ENCODE measurements at regions of chr7 and their contacts with region 1.

Region 1: DNA sequence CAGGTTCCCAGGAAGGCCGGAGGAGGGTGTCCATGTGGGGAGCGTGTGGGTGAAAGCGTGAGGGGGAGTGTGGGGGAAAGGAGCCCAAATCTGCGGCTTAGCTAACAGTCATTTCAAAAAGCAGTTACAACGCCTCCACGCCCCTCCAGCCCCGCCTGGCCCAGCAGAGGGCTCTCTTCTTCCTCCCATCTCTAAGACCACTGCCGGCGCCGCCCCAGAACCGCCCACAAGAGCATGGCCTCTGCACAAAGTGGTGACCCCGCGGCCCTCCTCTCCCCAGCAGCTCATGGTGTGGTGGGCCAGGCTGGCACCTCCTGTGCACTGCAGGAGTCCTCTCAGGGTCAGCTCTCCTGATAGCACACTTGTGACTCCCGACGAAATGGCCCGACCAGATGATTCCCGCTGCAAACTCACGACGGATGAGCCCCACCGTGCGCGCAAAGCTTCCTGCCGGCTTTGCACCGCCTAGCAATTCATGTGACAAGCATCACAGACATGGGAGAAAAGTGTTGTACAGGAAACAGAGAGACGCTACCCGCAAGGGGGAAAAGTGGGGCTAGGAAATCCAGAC is 12.4 kb upstream of the HUS1 start:
- DNase-seq: peak; percentile 94
- H3K4me3 Mint-ChIP-seq: peak overlapping the region; percentile 92
- H3K27ac Mint-ChIP-seq: peak overlapping the region; percentile 93
- H3K4me1 Mint-ChIP-seq: peaks cover 16% of the 10 kb centered on the region
- H3K27me3 Mint-ChIP-seq: no peaks in the 10 kb centered on the region

Region 2: GRCh38 chr7:47945261-47946001 is 46.4 kb before region 1 on chr7:
- CTCF ChIA-PET with region 1: interaction called, 9 read pairs
- intact Hi-C with region 1: loop called (anchors 1 kb)
- DNase-seq: peak; percentile 88
- H3K4me3 Mint-ChIP-seq: no peak overlapping the region
- H3K27ac Mint-ChIP-seq: no peak overlapping the region
- H3K4me1 Mint-ChIP-seq: no peaks in the 10 kb centered on the region
- H3K27me3 Mint-ChIP-seq: no peaks in the 10 kb centered on the region

Region 3: GRCh38 chr7:48004638-48005037 is 12.8 kb after region 1 on chr7:
- CTCF ChIA-PET with region 1: interaction called, 10 read pairs
- intact Hi-C with region 1: no loop called
- DNase-seq: no peak
- H3K4me3 Mint-ChIP-seq: no peak overlapping the region
- H3K27ac Mint-ChIP-seq: no peak overlapping the region
- H3K4me1 Mint-ChIP-seq: no peaks in the 10 kb centered on the region
- H3K27me3 Mint-ChIP-seq: no peaks in the 10 kb centered on the region

Region 4: DNA sequence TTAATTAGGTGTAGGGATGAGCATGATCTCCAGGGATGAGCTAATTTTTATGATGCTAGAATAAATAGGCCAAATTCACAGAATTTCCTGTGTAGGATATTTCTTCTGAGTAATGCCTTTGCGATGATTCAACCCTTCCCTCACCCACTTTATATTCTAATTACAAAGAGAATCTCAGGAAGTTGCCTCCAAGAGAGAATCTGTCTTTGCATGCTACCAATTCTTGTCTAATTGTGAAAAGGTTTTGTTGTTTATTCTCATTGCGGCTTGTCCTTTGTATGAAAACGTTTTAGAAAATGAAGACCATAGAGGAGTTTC is 49.8 kb after region 1 on chr7:
- CTCF ChIA-PET with region 1: no interaction called
- intact Hi-C with region 1: loop called (anchors 1 kb)
- DNase-seq: no peak
- H3K4me3 Mint-ChIP-seq: no peak overlapping the region
- H3K27ac Mint-ChIP-seq: peak overlapping the region; percentile 62
- H3K4me1 Mint-ChIP-seq: peaks cover 29% of the 10 kb centered on the region
- H3K27me3 Mint-ChIP-seq: peaks cover 11% of the 10 kb centered on the region

Region 5: GRCh38 chr7:48094751-48095562 is 103.1 kb after region 1 on chr7:
- CTCF ChIA-PET with region 1: interaction called, 12 read pairs
- intact Hi-C with region 1: loop called (anchors 1 kb)
- DNase-seq: no peak
- H3K4me3 Mint-ChIP-seq: no peak overlapping the region
- H3K27ac Mint-ChIP-seq: peak overlapping the region; percentile 94
- H3K4me1 Mint-ChIP-seq: peaks cover 84% of the 10 kb centered on the region
- H3K27me3 Mint-ChIP-seq: no peaks in the 10 kb centered on the region

Region 6: DNA sequence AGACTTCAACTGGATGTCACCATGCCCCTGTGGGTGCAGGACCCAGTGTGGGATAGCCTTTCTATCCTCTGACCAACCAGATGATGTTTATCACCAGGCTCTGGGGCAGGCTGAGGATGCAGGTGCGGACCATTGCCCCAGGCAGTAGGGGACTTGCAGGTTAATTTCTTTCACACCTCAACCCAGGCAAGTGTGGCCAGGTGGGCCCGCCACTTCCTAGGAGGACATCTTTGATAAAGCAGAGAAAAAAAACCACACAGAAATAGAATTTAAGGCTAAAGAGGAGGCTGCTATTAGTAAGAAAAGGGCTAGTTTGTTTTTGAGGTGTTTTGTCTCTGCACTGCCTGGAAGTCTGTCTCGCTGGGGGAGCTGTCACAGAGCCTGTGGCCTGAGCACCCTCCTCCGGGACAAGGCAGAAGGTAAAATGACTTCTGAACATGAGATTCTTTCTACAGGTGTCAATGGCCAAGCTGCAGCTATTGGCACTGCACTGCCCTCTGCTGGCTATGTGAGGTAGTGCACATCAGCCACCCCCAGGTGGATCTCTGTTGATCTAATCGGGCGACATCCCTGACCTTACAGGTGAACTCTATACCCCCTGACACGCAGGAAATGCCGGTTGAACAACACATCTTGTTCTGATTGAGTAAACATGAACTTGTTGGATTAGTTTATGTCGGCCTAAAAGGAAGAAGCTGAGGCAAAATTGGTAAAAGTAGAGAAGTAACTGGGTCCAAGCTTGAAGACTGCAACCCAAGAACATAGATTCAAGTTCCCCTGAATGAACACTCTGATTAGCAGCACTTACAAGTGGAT is 118.2 kb after region 1 on chr7:
- CTCF ChIA-PET with region 1: interaction called, 101 read pairs
- intact Hi-C with region 1: loop called (anchors 1 kb)
- DNase-seq: peak; percentile 96
- H3K4me3 Mint-ChIP-seq: no peak overlapping the region
- H3K27ac Mint-ChIP-seq: no peak overlapping the region
- H3K4me1 Mint-ChIP-seq: peaks cover 9% of the 10 kb centered on the region
- H3K27me3 Mint-ChIP-seq: no peaks in the 10 kb centered on the region

Region 7: GRCh38 chr7:48299580-48300169 is 307.8 kb after region 1 on chr7:
- CTCF ChIA-PET with region 1: no interaction called
- intact Hi-C with region 1: loop called (anchors 5 kb)
- DNase-seq: peak; percentile 75
- H3K4me3 Mint-ChIP-seq: no peak overlapping the region
- H3K27ac Mint-ChIP-seq: no peak overlapping the region
- H3K4me1 Mint-ChIP-seq: peaks cover 4% of the 10 kb centered on the region
- H3K27me3 Mint-ChIP-seq: peaks cover 8% of the 10 kb centered on the region

Measured in activated naive CD4-positive, alpha-beta T cell treated with anti-CD3 and anti-CD28 coated beads for 36 hours (primary cell).